Activated CD4-positive, alpha-beta T cell treated with anti-CD3 and anti-CD28 coated beads for 36 hours (primary cell): ENCODE measurements at regions of chr12 and their contacts with region 1.

Region 1: DNA sequence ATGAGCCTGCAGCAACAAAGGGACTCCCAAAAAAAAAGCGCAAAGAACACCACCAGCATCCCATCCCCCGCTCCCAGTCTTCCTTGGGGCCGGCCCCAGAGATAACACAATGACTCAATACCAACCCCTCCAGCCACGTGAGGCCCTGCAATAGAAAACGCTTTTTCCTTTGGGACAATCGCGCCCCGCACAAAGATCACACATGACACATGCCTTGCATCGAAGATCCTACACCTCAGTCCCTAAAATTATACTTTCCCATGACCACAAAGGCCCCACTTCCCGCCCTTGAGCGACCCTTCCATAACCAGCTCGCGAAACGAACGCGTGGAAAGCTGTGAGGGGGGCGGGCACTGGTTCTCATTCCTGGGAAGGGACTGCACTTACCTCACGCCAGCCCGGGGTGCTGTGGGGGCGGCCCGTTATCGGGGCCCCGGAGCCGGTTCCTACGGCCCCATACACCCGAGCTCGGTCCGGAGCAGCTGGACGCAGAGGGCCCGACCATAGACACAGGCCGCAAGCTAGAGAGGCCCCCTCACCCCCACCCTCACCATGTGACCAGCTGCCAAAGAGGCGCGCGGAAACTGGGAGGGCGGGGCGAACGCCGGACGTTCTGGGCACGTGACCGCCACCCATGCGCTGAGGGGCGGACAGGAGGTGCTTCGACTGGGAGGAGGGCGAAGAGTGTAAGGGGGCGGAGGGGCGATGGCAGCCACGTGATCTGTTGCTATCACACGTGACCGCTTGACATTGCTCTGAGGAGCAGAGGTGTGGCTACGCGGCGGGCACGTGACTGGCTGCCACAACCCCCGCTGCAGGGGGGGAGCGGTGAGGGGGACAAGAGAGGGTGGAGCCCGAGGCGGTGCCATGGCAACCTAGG is at the start of gene CDK4:
- DNase-seq: peak; percentile 99
- ATAC-seq: peak; percentile 77
- H3K4me3 Mint-ChIP-seq: peak within 1 kb of the TSS; percentile 100
- H3K27ac Mint-ChIP-seq: peak within 1 kb of the TSS; percentile 99
- H3K4me1 Mint-ChIP-seq: peaks cover 56% of the 10 kb centered on the region
- H3K27me3 Mint-ChIP-seq: no peaks in the 10 kb centered on the region
- total RNA-seq, gene CDK4: 132 to 208 TPM

Region 2: DNA sequence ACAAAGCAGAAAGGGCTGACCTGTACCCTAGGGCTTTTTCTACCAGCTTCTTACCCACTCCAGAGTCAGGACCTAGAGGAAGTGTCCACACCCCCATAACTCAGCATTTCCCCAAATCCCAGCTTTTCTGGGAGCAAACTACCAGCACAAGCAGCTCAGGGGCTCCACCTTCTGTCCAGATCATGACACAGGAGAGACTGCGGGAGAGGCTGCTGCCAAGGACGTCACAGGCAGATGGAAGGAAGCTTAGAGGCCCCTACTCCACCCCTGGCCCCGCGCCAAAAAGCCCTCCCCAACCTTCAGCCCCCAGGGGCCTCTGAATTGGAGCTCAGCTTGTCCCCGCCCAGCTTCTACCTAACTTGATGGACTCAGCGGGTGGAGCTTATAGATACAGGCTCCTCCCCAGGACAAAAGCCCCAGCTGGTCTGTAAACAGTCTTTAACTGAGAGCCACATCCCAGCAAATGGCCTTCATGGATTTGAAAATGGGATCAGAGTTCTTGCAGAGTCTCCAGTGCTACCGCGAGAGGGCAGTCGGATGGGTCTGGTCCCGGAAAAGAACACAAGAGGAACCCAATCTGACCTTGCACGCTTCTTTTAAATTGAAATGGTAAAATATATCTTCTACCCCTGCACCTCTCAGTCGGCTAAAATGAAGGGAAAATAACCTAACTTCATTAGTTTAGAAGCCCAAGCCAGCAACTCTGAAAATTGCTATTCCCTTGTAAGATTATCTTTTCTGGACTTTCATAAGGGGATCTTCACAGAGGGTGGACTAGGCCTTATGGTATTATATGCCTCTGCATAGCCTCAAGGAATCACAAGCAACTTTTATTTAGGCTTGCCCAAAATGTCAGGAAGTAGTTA is 1115.1 kb before region 1 on chr12:
- CTCF ChIA-PET with region 1: no interaction called
- POLR2A ChIA-PET with region 1: no interaction called
- intact Hi-C with region 1: loop called in 1 of 2 experiments (anchors 10 kb)
- DNase-seq: peak; percentile 98
- ATAC-seq: peak; percentile 73
- H3K4me3 Mint-ChIP-seq: peak overlapping the region; percentile 87
- H3K27ac Mint-ChIP-seq: peak overlapping the region; percentile 92
- H3K4me1 Mint-ChIP-seq: peaks cover 60% of the 10 kb centered on the region
- H3K27me3 Mint-ChIP-seq: no peaks in the 10 kb centered on the region

Region 3: DNA sequence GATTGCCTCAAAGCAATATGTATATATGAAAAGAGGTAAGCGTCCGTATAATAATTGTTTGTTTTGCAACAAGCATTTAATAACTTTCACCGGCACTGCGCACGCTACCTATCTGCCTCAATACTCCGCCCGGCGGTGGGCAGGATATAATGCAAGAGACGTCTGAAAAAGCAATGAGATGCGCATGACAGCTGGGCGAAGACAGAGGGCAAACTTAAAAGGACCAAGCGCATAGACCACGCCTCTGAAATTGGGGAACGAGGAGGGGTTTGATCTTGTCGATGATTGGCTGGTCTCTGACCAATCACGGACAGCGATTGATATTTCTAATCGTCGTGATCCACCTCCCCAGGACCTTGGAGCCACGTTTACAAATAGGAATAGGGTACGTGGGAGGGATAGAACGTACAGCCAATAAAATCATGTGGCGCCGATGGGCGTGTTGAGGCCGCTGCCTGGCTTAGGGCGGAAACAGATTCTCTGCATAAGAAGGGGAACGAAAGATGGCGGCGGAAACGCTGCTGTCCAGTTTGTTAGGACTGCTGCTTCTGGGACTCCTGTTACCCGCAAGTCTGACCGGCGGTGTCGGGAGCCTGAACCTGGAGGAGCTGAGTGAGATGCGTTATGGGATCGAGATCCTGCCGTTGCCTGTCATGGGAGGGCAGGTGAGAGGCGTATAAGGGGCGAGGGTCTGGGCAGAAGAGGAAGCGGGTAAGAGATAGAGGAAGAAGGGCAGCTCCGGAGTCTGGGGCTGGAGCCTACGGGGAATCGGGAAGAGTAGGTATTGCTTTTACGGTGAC is 58.2 kb before region 1 on chr12 and contains the start of gene OS9:
- CTCF ChIA-PET with region 1: no interaction called
- POLR2A ChIA-PET with region 1: no interaction called
- intact Hi-C with region 1: loop called in 1 of 2 experiments (anchors 2 kb)
- DNase-seq: peak; percentile 96
- ATAC-seq: peak; percentile 98
- H3K4me3 Mint-ChIP-seq: no peak within 1 kb of the TSS
- H3K27ac Mint-ChIP-seq: no peak within 1 kb of the TSS
- H3K4me1 Mint-ChIP-seq: peaks cover 4% of the 10 kb centered on the region
- H3K27me3 Mint-ChIP-seq: peaks cover 8% of the 10 kb centered on the region
- total RNA-seq, gene OS9: 61.7 to 63.2 TPM

Region 4: GRCh38 chr12:57771708-57772428 is 19.8 kb after region 1 on chr12 and contains the start of gene METTL1:
- CTCF ChIA-PET with region 1: interaction called, 54 read pairs
- POLR2A ChIA-PET with region 1: interaction called, 6 read pairs
- intact Hi-C with region 1: loop called (anchors 1 kb)
- DNase-seq: peak; percentile 97
- ATAC-seq: peak; percentile 89
- H3K4me3 Mint-ChIP-seq: peak within 1 kb of the TSS; percentile 94
- H3K27ac Mint-ChIP-seq: peak within 1 kb of the TSS; percentile 98
- H3K4me1 Mint-ChIP-seq: peaks cover 24% of the 10 kb centered on the region
- H3K27me3 Mint-ChIP-seq: no peaks in the 10 kb centered on the region
- total RNA-seq, gene METTL1: 31.9 to 33.5 TPM

Region 5: GRCh38 chr12:57836442-57837375 is 84.7 kb after region 1 on chr12:
- CTCF ChIA-PET with region 1: interaction called, 10 read pairs
- POLR2A ChIA-PET with region 1: no interaction called
- intact Hi-C with region 1: no loop called
- DNase-seq: peak; percentile 68
- ATAC-seq: peak; percentile 51
- H3K4me3 Mint-ChIP-seq: peak overlapping the region; percentile 49
- H3K27ac Mint-ChIP-seq: peak overlapping the region; percentile 85
- H3K4me1 Mint-ChIP-seq: peaks cover 94% of the 10 kb centered on the region
- H3K27me3 Mint-ChIP-seq: no peaks in the 10 kb centered on the region

Region 6: DNA sequence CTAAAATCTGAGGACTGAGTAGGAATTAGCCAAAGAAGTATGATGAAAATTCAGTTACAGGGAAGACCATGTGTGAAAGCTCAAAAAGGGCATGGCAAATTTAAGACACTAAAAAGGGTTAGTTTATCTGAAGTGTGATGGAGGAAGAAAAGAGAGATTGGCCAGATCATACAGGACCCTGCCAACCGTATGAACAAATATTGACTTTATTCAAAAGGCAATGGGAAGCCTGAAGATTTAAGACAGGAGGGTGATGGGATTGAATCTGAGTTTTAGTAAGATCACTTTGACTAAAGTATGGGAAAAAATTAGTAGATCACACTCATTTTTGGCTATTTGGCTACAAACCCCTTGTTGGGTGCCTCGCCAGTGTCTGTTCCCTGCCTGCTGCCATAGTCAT is 125.2 kb after region 1 on chr12:
- CTCF ChIA-PET with region 1: no interaction called
- POLR2A ChIA-PET with region 1: no interaction called
- intact Hi-C with region 1: no loop called
- DNase-seq: no peak
- ATAC-seq: peak; percentile 14
- H3K4me3 Mint-ChIP-seq: no peak overlapping the region
- H3K27ac Mint-ChIP-seq: no peak overlapping the region
- H3K4me1 Mint-ChIP-seq: peaks cover 10% of the 10 kb centered on the region
- H3K27me3 Mint-ChIP-seq: peaks cover 2% of the 10 kb centered on the region

Region 7: GRCh38 chr12:57899010-57899662 is 147.1 kb after region 1 on chr12:
- CTCF ChIA-PET with region 1: interaction called, 4 read pairs
- POLR2A ChIA-PET with region 1: no interaction called
- intact Hi-C with region 1: loop called in 1 of 2 experiments (anchors 2 kb)
- DNase-seq: peak; percentile 91
- ATAC-seq: peak; percentile 92
- H3K4me3 Mint-ChIP-seq: peak overlapping the region; percentile 23
- H3K27ac Mint-ChIP-seq: peak overlapping the region; percentile 92
- H3K4me1 Mint-ChIP-seq: peaks cover 48% of the 10 kb centered on the region
- H3K27me3 Mint-ChIP-seq: no peaks in the 10 kb centered on the region